ENCODE measurements at regions of chr2 and their contacts with region 1.

Region 1: GRCh38 chr2:10741139-10741538 is 19.7 kb downstream of the ATP6V1C2 start:
- DNase-seq: no peak
- H3K4me3 ChIP-seq: no peak overlapping the region
- CTCF ChIP-seq: no peak

Region 2: GRCh38 chr2:10385933-10386773 is 355.0 kb before region 1 on chr2:
- in situ Hi-C with region 1: no loop called
- DNase-seq: no peak
- H3K4me3 ChIP-seq: no peak overlapping the region
- CTCF ChIP-seq: no peak

Region 3: DNA sequence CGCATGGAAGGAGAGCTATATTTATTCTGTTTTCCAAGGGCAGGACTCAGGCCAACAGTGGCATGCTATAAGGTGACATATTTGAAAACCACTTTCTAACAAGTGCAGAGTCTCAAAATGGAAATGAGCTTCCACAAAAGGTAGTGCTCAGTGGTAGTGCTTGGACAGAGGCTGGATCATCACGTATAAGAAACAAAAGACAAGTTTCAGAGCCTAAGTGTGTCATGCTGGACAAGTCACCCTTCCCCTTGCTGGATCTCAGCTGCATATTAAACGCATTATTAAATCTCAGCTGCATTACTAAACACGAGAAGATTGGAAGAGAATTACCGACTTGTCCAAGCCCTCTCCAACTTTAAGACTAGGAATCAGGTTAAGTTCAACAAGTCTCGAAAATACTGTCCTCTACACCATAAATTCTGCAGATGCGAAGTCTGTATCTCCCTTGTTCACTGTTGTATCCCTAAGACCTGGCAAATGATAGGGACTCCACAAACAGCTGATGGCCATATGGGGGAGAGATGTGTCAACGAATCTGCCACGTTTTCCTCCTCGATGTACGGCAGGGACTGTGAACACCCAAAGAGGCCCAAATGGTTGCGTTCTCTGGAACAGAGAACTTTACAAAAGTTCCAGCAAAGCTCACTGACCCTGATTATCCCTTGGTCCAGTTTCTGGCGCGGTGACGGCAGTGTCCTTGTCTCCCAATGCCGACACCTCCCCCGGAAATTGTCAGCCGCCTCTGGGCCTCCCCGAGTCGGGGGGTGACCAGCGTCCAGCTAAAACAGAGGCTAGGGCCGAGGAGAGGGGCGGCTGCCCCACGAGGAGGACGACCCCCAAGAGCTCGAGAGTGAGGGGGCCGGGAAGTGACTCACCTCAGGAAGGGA is 52.0 kb before region 1 on chr2:
- in situ Hi-C with region 1: loop called (anchors 10 kb)
- DNase-seq: no peak
- H3K4me3 ChIP-seq: peak overlapping the region; percentile 92
- CTCF ChIP-seq: no peak

Region 4: GRCh38 chr2:10787176-10787968 is 46.2 kb after region 1 on chr2:
- in situ Hi-C with region 1: loop called (anchors 5 kb)
- DNase-seq: no peak
- H3K4me3 ChIP-seq: no peak overlapping the region
- CTCF ChIP-seq: peak; percentile 30

Region 5: DNA sequence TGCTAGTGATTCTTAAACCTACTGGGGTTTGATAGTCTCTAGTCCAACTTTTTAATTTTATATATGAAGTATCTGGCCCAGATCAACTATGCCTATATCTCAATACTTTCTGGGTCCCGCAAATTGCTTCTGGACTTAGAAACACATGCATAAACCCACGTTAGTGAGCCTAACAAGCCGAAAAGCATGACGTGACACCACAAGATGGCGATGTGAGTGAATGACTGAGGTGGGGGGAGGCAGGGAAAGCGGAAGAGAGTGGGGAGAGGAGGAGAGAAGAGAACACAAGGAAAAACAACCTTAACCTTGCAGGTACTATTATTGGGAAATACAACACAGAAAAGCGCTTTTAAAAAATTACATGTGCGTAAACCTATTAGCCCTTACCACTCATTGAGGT is 57.6 kb after region 1 on chr2:
- in situ Hi-C with region 1: no loop called
- DNase-seq: no peak
- H3K4me3 ChIP-seq: no peak overlapping the region
- CTCF ChIP-seq: no peak